ENCODE measurements at regions of chr14 and their contacts with region 1.

Region 1: GRCh38 chr14:60091550-60092530 is at the start of gene PCNX4:
- DNase-seq: peak; percentile 88
- ATAC-seq: peak; percentile 91
- H3K4me3 Mint-ChIP-seq: peak within 1 kb of the TSS; percentile 92
- H3K27ac Mint-ChIP-seq: peak within 1 kb of the TSS; percentile 96
- H3K4me1 Mint-ChIP-seq: peaks cover 37% of the 10 kb centered on the region
- H3K27me3 Mint-ChIP-seq: no peaks in the 10 kb centered on the region
- CTCF ChIP-seq: no peak
- total RNA-seq, gene PCNX4: 31.7 and 41.4 TPM in 2 replicates

Region 2: DNA sequence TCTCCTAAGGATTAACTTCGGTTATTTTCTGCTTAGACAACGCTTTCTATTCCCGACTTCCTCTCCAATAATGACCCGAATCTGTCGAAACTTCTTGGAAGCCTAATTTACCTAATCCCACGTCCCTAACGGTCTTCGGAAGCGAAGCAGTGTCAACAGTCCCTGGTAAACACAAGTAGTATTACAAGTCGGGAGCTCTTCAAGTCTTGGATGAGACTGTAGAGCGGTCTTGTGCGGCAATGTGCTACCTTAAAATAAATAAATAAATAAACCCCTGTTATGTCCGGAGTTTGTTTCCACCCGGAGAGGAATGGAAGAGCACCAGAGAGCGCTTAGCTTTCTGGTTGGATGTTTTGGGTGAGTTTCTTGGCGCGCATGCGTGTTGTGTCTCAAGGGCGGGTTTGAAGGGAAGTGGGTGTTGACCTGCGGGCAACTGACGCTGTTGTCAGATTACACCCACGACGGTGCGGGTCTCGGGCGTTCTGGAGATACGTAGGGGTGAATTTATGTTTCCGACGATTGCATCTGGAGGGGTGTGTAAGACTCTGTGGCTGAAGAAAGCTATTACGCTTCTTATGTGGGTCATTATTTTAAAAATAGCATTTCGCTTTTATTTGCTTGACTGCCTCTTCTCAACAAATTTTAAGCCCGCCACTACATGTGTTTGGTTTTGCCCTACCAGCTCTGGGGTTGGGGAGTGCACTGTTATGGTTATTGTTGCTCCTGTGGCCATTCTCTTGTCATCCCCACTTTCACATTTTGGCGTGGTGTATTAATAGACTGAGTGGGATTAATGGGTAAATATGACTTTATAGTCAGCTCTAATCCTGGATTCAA is 1664.3 kb before region 1 on chr14 and contains the starts of genes KIAA0586 and TIMM9:
- CTCF ChIA-PET with region 1: no interaction called
- POLR2A ChIA-PET with region 1: no interaction called
- intact Hi-C with region 1: loop called (anchors 2 kb)
- DNase-seq: peak; percentile 85
- ATAC-seq: peak; percentile 93
- H3K4me3 Mint-ChIP-seq: peak within 1 kb of the TSS; percentile 94
- H3K27ac Mint-ChIP-seq: peak within 1 kb of the TSS; percentile 97
- H3K4me1 Mint-ChIP-seq: peaks cover 46% of the 10 kb centered on the region
- H3K27me3 Mint-ChIP-seq: no peaks in the 10 kb centered on the region
- CTCF ChIP-seq: no peak
- total RNA-seq, gene KIAA0586: 18.3 and 19.8 TPM in 2 replicates
- total RNA-seq, gene TIMM9: 29.1 and 35.7 TPM in 2 replicates

Region 3: GRCh38 chr14:59576332-59577294 is 515.2 kb before region 1 on chr14 and contains the start of gene CCDC175:
- CTCF ChIA-PET with region 1: no interaction called
- POLR2A ChIA-PET with region 1: no interaction called
- intact Hi-C with region 1: loop called (anchors 10 kb)
- DNase-seq: peak; percentile 68
- ATAC-seq: peak; percentile 94
- H3K4me3 Mint-ChIP-seq: peak within 1 kb of the TSS; percentile 70
- H3K27ac Mint-ChIP-seq: no peak within 1 kb of the TSS
- H3K4me1 Mint-ChIP-seq: peaks cover 8% of the 10 kb centered on the region
- H3K27me3 Mint-ChIP-seq: peaks cover 11% of the 10 kb centered on the region
- CTCF ChIP-seq: no peak
- total RNA-seq, gene CCDC175: not detected in 2 replicates

Region 4: GRCh38 chr14:60064491-60065072 is 27.3 kb before region 1 on chr14:
- CTCF ChIA-PET with region 1: no interaction called
- POLR2A ChIA-PET with region 1: interaction called, 7 read pairs
- intact Hi-C with region 1: loop called (anchors 2 kb)
- DNase-seq: no peak
- ATAC-seq: peak; percentile 57
- H3K4me3 Mint-ChIP-seq: no peak overlapping the region
- H3K27ac Mint-ChIP-seq: no peak overlapping the region
- H3K4me1 Mint-ChIP-seq: no peaks in the 10 kb centered on the region
- H3K27me3 Mint-ChIP-seq: peaks cover 4% of the 10 kb centered on the region
- CTCF ChIP-seq: peak; percentile 54

Region 5: GRCh38 chr14:60133487-60133886 is 41.6 kb after region 1 on chr14:
- CTCF ChIA-PET with region 1: no interaction called
- POLR2A ChIA-PET with region 1: no interaction called
- intact Hi-C with region 1: loop called (anchors 5 kb)
- DNase-seq: no peak
- ATAC-seq: no peak
- H3K4me3 Mint-ChIP-seq: no peak overlapping the region
- H3K27ac Mint-ChIP-seq: no peak overlapping the region
- H3K4me1 Mint-ChIP-seq: no peaks in the 10 kb centered on the region
- H3K27me3 Mint-ChIP-seq: no peaks in the 10 kb centered on the region
- CTCF ChIP-seq: no peak

Region 6: DNA sequence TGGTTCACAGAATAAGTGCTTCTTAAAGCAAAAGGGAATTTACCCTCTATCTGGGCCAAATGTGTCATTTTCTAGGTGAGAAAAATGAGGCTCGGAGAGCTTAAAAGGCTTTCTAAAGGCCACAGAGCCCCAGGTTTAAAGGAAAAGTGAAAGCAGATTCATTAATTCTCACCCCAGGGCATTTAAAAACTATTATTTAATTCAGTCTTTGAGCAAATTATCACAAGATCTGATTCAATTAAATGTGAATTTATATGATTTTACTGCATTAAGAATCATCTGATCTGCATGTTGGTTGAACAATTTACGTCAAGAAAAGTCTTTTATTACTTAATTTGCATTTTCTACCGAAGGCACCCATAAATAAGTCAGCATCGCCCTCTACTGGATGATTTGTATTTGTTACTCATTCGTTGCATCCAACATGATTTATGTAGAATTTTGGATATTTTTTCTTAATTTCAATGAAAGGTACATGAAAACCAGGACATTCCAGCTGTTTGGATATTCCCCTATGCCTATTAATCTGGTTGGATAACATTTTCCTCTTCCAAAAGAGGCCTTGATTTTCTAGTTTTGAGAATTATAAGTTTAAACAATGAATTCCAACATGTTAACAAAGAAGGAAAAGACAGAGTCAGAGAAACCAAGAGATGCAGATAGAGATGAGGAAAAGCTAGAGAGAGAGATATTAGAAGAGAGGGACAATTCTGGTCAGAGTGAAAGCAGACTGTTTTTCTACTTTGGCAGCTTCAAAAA is 92.5 kb after region 1 on chr14:
- CTCF ChIA-PET with region 1: interaction called, 4 read pairs
- POLR2A ChIA-PET with region 1: interaction called, 5 read pairs
- intact Hi-C with region 1: loop called (anchors 1 kb)
- DNase-seq: no peak
- ATAC-seq: peak; percentile 56
- H3K4me3 Mint-ChIP-seq: peak overlapping the region; percentile 82
- H3K27ac Mint-ChIP-seq: peak overlapping the region; percentile 87
- H3K4me1 Mint-ChIP-seq: peaks cover 17% of the 10 kb centered on the region
- H3K27me3 Mint-ChIP-seq: no peaks in the 10 kb centered on the region
- CTCF ChIP-seq: peak; percentile 89

Region 7: DNA sequence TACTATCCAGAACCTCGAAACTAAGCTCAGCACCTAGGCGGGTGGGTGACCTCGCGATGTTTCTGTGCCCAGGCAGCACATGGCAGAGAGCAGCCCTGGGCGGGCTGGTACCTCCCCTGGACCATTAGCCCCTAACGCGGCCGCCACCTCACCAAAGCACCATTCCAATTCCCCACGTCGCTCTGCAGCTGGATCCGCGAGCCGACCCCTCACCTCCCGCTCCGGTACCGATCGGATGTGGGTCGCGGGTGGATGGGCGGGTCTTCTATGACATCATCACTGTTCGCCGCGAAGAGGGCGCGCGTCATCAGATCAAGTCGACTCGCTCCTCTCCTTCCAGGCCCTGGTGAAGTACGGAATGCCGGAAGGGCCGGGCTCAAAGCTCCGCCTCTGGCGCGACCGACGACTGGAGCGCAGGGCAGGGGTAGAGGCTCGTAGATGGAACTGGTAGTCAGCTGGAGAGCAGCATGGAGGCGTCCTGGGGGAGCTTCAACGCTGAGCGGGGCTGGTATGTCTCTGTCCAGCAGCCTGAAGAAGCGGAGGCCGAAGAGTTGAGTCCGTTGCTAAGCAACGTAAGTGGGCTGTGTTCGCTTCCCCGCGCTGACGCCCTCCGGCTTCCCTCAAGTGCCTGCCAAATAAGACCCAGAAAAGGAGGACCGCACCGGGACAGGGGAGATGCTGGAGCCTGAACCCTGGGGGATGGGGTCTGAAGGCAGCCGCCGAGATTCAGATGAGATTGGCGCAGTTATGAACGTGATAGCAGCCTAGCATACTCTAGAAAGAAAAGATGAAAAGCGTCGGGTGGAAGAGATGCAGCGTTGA is 889.2 kb after region 1 on chr14 and contains the starts of genes SLC38A6 and TRMT5:
- CTCF ChIA-PET with region 1: no interaction called
- POLR2A ChIA-PET with region 1: no interaction called
- intact Hi-C with region 1: loop called (anchors 1 kb)
- DNase-seq: peak; percentile 88
- ATAC-seq: peak; percentile 83
- H3K4me3 Mint-ChIP-seq: no peak within 1 kb of the TSS
- H3K27ac Mint-ChIP-seq: no peak within 1 kb of the TSS
- H3K4me1 Mint-ChIP-seq: peaks cover 17% of the 10 kb centered on the region
- H3K27me3 Mint-ChIP-seq: no peaks in the 10 kb centered on the region
- CTCF ChIP-seq: no peak
- total RNA-seq, gene SLC38A6: 10.4 and 10.8 TPM in 2 replicates
- total RNA-seq, gene TRMT5: 11.5 and 13.2 TPM in 2 replicates

Measured in activated B cell treated with CpG ODN at 0.5 μM for 24 hours (primary cell).